ENCODE measurements at regions of chr1 and their contacts with region 1.

Region 1: GRCh38 chr1:31111290-31111977 is 45.9 kb upstream of the PUM1 start:
- DNase-seq: no peak
- H3K4me3 ChIP-seq: no peak overlapping the region
- H3K27ac ChIP-seq: peak overlapping the region in 1 of 2 donors; percentile 25
- H3K4me1 ChIP-seq: no peaks in the 10 kb centered on the region
- H3K27me3 ChIP-seq: no peaks in the 10 kb centered on the region
- CTCF ChIP-seq: no peak
- POLR2A ChIP-seq: no peak

Region 2: GRCh38 chr1:31181515-31182343 is 70.3 kb after region 1 on chr1:
- intact Hi-C with region 1: loop called (anchors 2 kb)
- DNase-seq: peak in 1 of 2 donors; percentile 64
- H3K4me3 ChIP-seq: peak overlapping the region; percentile 18 to 57 (median 22)
- H3K27ac ChIP-seq: no peak overlapping the region
- H3K4me1 ChIP-seq: peaks cover 6 to 13% of the 10 kb centered on the region in 2 donors
- H3K27me3 ChIP-seq: peaks cover 0 to 4% of the 10 kb centered on the region in 2 donors
- CTCF ChIP-seq: peak; percentile 43 to 80 (median 58)
- POLR2A ChIP-seq: no peak

Measured in breast epithelium (tissue), 4 donors.